Colonic mucosa (tissue), 4 donors: ENCODE measurements at regions of chr3 and their contacts with region 1.

Region 1: GRCh38 chr3:194573691-194574437 is 59.4 kb downstream of the TMEM44 start:
- DNase-seq: peak; percentile 35
- H3K4me3 ChIP-seq: no peak overlapping the region
- H3K27ac ChIP-seq: no peak overlapping the region
- H3K4me1 ChIP-seq: no peaks in the 10 kb centered on the region
- H3K27me3 ChIP-seq: no peaks in the 10 kb centered on the region
- CTCF ChIP-seq: peak; percentile 40

Region 2: GRCh38 chr3:194134757-194135528 is 438.9 kb before region 1 on chr3:
- intact Hi-C with region 1: no loop called
- DNase-seq: peak; percentile 94
- H3K4me3 ChIP-seq: peak overlapping the region; percentile 54
- H3K27ac ChIP-seq: peak overlapping the region; percentile 89
- H3K4me1 ChIP-seq: no peaks in the 10 kb centered on the region
- H3K27me3 ChIP-seq: no peaks in the 10 kb centered on the region
- CTCF ChIP-seq: no peak

Region 3: GRCh38 chr3:194333212-194333980 is 240.5 kb before region 1 on chr3:
- intact Hi-C with region 1: loop called (anchors 10 kb)
- DNase-seq: peak; percentile 93
- H3K4me3 ChIP-seq: peak overlapping the region; percentile 38
- H3K27ac ChIP-seq: no peak overlapping the region
- H3K4me1 ChIP-seq: no peaks in the 10 kb centered on the region
- H3K27me3 ChIP-seq: peaks cover 6% of the 10 kb centered on the region
- CTCF ChIP-seq: peak; percentile 98

Region 4: GRCh38 chr3:194472290-194472920 is 101.5 kb before region 1 on chr3:
- intact Hi-C with region 1: loop called (anchors 5 kb)
- DNase-seq: no peak
- H3K4me3 ChIP-seq: no peak overlapping the region
- H3K27ac ChIP-seq: no peak overlapping the region
- H3K4me1 ChIP-seq: no peaks in the 10 kb centered on the region
- H3K27me3 ChIP-seq: no peaks in the 10 kb centered on the region
- CTCF ChIP-seq: peak; percentile 97

Region 5: DNA sequence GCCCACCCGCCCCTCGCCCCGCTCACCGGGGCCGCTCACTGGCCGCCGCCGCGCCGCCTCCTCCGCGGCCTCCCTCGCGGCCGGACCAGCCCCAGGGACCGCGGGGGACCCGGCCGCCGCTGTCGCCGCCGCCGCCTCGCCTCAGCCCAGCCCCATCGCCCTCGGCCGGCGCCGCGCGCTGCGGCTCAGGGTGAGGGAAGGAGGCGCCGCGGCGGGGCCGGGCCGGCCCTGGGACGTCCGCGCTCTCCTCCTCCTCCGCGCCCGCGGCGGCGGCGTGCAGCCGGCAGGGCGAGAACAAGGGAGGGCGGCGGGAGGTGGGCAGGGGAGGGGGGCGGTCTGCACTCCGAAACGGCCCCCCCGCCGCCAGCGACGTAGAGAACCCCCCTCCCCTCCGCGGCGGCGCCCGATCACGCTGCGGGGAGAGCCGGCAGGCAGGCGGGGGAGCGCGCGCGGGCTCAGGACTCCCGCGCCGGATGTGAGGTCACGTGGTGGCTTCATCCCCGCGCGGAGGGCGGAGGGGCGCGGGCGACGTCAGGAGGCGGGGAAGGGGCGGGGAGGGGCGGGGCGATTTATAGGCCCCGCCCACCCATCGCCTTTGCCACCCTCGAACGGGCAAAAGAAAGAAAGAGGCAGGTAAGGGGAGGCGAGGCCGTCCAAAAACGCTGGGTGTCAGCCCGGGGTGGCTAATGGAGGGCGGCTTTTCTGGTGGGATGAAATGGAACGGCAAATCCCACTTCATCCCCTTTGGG is 87.2 kb before region 1 on chr3 and contains the start of gene ATP13A3:
- intact Hi-C with region 1: loop called (anchors 5 kb)
- DNase-seq: peak; percentile 88
- H3K4me3 ChIP-seq: peak within 1 kb of the TSS; percentile 69
- H3K27ac ChIP-seq: peak within 1 kb of the TSS; percentile 69
- H3K4me1 ChIP-seq: peaks cover 4% of the 10 kb centered on the region
- H3K27me3 ChIP-seq: no peaks in the 10 kb centered on the region
- CTCF ChIP-seq: no peak
- total RNA-seq, gene ATP13A3: 86.0 to 89.8 TPM